IMR-90 (cell line): ENCODE measurements at regions of chr7 and their contacts with region 1.

Region 1: DNA sequence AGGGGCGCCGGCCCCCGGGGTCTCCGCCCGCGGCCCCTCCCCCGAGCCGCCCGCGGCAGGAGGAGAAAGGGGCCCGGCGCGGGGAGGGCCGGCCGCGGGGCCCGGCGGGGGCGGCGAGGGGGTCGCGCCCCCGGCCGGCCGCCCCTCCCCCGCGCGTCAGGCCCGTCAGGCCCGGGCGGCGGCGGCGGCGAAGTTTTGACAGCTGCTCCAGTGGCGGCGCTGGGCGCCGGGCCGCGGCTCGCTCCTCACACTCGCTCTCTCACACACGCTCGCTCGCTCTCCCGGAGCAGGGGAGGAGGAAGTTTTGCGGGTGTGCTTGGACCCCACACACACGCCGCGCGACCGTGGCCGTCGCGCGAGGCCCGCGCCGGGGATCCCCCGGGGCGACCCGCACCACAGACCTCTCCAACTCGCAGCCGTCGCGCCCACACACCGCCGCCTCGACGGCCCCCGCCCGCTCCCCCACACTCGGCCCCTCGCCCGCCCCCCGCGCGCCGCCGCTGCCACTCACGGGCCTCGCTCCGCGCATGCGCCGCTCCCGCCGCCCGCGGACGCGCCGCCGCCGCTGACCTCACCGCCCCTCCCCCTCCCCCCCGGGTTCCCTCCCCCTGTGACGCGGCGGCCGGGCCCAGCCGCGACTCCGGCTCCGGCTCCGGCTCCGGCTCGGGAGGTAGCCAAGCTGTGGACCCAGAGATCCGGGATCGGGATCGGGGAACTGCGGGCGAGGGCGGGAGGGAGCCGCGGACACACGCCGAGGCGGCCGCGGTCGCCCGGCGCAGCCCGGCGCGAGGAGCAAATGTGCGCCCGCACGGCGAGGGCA is 518 bp upstream of the KMT2C start:
- DNase-seq: peak; percentile 89
- ATAC-seq: peak; percentile 86
- H3K4me3 ChIP-seq: peak overlapping the region; percentile 69
- H3K27ac ChIP-seq: peak overlapping the region; percentile 75
- H3K4me1 ChIP-seq: 0 out of 2 replicates have a peak, but pooled peaks cover 2% of the 10 kb centered on the region
- H3K27me3 ChIP-seq: no peaks in the 10 kb centered on the region
- CTCF ChIP-seq: no peak
- POLR2A ChIP-seq: 0 out of 2 replicates have a peak, but pooled peaks have one; percentile 3
- RAD21 ChIP-seq: peak; percentile 28; the same call in 1 of the 2 replicates

Region 2: DNA sequence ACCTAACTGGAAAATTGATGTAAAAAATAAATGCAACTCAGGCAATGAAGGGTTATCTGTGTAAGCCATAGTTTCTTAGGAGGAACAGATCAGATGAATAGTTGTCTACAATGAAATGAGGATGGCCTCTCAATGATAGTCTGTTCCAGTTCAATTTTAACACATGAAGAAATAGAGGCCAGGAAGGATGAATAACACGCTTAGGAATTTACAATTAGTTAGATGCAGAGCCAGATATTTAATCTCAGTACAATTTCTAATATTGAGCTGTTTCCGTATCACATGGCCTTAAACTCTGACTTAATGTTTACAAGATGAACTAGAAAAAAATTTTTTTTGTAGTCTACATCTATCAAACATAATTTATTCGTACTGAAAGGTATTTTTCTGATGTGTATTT is 234.3 kb before region 1 on chr7:
- CTCF ChIA-PET with region 1: no interaction called
- POLR2A ChIA-PET with region 1: no interaction called
- dilution Hi-C with region 1: no loop called
- in situ Hi-C with region 1: no loop called
- intact Hi-C with region 1: loop called (anchors 10 kb)
- DNase-seq: peak; percentile 50
- ATAC-seq: peak; percentile 73
- H3K4me3 ChIP-seq: no peak overlapping the region
- H3K27ac ChIP-seq: no peak overlapping the region
- H3K4me1 ChIP-seq: peaks cover 4% of the 10 kb centered on the region
- H3K27me3 ChIP-seq: no peaks in the 10 kb centered on the region
- CTCF ChIP-seq: no peak
- POLR2A ChIP-seq: no peak
- RAD21 ChIP-seq: no peak

Region 3: GRCh38 chr7:152463709-152464311 is 27.5 kb after region 1 on chr7:
- CTCF ChIA-PET with region 1: no interaction called
- POLR2A ChIA-PET with region 1: no interaction called
- dilution Hi-C with region 1: no loop called
- in situ Hi-C with region 1: no loop called
- intact Hi-C with region 1: loop called (anchors 1 kb)
- DNase-seq: peak; percentile 98
- ATAC-seq: peak; percentile 95
- H3K4me3 ChIP-seq: peak overlapping the region; percentile 91
- H3K27ac ChIP-seq: peak overlapping the region; percentile 91
- H3K4me1 ChIP-seq: no peaks in the 10 kb centered on the region; the same call in 1 of the 2 replicates
- H3K27me3 ChIP-seq: no peaks in the 10 kb centered on the region
- CTCF ChIP-seq: no peak
- POLR2A ChIP-seq: peak; percentile 54; the same call in 1 of the 2 replicates
- RAD21 ChIP-seq: no peak

Region 4: GRCh38 chr7:152675759-152676636 is 239.7 kb after region 1 on chr7 and contains the start of gene XRCC2:
- CTCF ChIA-PET with region 1: no interaction called
- POLR2A ChIA-PET with region 1: no interaction called
- dilution Hi-C with region 1: no loop called
- in situ Hi-C with region 1: no loop called
- intact Hi-C with region 1: loop called (anchors 10 kb)
- DNase-seq: peak; percentile 85
- ATAC-seq: peak; percentile 95
- H3K4me3 ChIP-seq: peak within 1 kb of the TSS; percentile 54
- H3K27ac ChIP-seq: peak within 1 kb of the TSS; percentile 60
- H3K4me1 ChIP-seq: no peaks in the 10 kb centered on the region
- H3K27me3 ChIP-seq: no peaks in the 10 kb centered on the region
- CTCF ChIP-seq: no peak
- POLR2A ChIP-seq: peak; percentile 92
- RAD21 ChIP-seq: no peak
- total RNA-seq, gene XRCC2: 3.6 and 5.6 TPM in 2 replicates

Region 5: GRCh38 chr7:152709287-152710152 is 273.2 kb after region 1 on chr7:
- CTCF ChIA-PET with region 1: no interaction called
- POLR2A ChIA-PET with region 1: no interaction called
- dilution Hi-C with region 1: no loop called
- in situ Hi-C with region 1: no loop called
- intact Hi-C with region 1: loop called (anchors 2 kb)
- DNase-seq: peak; percentile 16
- ATAC-seq: no peak
- H3K4me3 ChIP-seq: no peak overlapping the region
- H3K27ac ChIP-seq: no peak overlapping the region
- H3K4me1 ChIP-seq: no peaks in the 10 kb centered on the region
- H3K27me3 ChIP-seq: no peaks in the 10 kb centered on the region
- CTCF ChIP-seq: no peak
- POLR2A ChIP-seq: no peak
- RAD21 ChIP-seq: no peak